Activated B cell treated with CpG ODN at 0.5 μM for 24 hours (primary cell): ENCODE measurements at regions of chr11 and their contacts with region 1.

Region 1: DNA sequence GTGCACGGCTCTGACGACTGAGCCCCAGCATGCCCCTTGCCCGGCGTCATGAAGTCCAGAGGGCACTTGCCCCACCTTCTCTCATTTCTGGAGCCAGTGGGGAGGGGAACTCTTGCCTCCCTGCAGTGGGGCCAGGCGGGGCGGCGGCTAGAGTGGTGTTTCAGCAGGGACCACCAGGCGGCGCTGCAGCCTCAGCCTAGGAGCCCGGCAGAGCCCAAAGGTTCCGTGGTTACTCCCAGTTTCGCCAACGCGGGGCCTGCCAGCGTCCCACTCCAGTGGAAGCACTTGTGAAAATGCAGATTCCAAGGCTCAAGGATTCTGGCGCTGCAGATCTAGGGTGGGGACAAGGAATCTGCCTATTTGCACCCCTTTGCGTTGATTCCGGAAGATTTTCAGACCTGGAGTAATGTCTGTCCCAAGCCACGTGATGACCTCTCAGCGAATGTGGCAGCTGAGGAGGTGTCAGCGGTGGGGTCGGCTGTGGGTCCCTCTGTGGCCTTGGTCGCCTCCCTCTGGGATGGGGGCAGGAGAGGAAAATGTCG is 55.7 kb downstream of the CD82 start:
- DNase-seq: peak; percentile 71
- ATAC-seq: peak; percentile 49
- H3K4me3 Mint-ChIP-seq: peak overlapping the region; percentile 15
- H3K27ac Mint-ChIP-seq: no peak overlapping the region
- H3K4me1 Mint-ChIP-seq: peaks cover 67% of the 10 kb centered on the region
- H3K27me3 Mint-ChIP-seq: no peaks in the 10 kb centered on the region
- CTCF ChIP-seq: peak; percentile 20

Region 2: DNA sequence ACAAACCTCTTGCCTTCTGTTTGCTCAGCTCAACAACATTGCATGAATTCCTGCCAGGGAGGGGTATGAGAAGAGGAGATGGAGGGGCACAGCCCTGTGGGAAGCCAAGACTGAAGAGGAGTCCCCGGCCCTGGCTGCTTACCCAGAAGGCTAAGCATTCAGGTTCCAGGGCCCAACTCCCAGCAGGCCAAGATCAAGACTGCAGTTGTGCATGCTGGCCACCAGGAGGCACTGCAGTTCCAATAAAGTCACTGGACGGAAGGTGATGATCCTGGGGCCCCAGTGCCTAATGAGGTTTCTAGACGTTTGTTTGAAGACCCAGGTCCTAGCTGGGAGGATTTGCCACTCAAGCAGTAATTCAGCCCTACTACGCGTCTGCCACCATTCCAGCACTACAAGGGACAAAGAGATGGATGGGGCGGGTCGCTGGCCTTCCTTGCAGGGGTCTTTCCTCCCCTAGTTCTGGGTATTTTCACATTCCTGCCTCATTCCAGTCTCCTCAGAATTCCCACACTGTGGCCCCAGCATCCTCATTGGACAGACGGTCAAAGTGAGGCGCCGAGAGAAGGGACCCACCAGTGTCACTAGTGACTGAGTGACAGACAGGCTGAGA is 334.8 kb before region 1 on chr11:
- CTCF ChIA-PET with region 1: interaction called, 4 read pairs
- POLR2A ChIA-PET with region 1: no interaction called
- intact Hi-C with region 1: loop called (anchors 2 kb)
- DNase-seq: peak; percentile 55
- ATAC-seq: peak; percentile 79
- H3K4me3 Mint-ChIP-seq: no peak overlapping the region
- H3K27ac Mint-ChIP-seq: peak overlapping the region; percentile 16
- H3K4me1 Mint-ChIP-seq: no peaks in the 10 kb centered on the region
- H3K27me3 Mint-ChIP-seq: peaks cover 16% of the 10 kb centered on the region
- CTCF ChIP-seq: peak; percentile 44

Region 3: DNA sequence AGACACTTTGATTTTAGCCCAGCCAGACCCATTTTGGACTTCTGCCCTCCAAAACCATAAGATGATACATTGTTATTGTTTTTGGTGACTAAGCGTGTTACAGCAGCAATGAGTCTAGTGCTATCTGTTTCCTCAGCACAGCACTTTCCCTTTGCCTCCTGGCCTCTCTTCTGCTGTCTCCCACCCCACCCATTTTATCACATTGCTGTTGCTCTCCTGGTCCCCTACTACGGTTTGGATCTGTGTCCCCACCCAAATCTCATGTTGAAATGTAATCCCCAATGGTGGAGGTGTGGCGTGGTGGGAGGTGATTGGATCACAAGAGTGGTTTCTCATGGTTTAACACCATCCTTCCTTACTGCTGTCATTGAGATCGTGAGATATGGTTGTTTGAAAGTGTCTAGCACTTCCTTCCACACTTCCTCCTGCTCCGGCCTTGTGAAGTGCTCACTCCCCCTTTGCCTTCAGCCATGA is 115.6 kb before region 1 on chr11:
- CTCF ChIA-PET with region 1: no interaction called
- POLR2A ChIA-PET with region 1: no interaction called
- intact Hi-C with region 1: no loop called
- DNase-seq: no peak
- ATAC-seq: no peak
- H3K4me3 Mint-ChIP-seq: no peak overlapping the region
- H3K27ac Mint-ChIP-seq: no peak overlapping the region
- H3K4me1 Mint-ChIP-seq: no peaks in the 10 kb centered on the region
- H3K27me3 Mint-ChIP-seq: peaks cover 11% of the 10 kb centered on the region
- CTCF ChIP-seq: no peak

Region 4: GRCh38 chr11:44556735-44557409 is 64.3 kb before region 1 on chr11:
- CTCF ChIA-PET with region 1: interaction called, 398 read pairs
- POLR2A ChIA-PET with region 1: interaction called, 176 read pairs
- intact Hi-C with region 1: loop called (anchors 1 kb)
- DNase-seq: no peak
- ATAC-seq: peak; percentile 51
- H3K4me3 Mint-ChIP-seq: peak overlapping the region; percentile 49
- H3K27ac Mint-ChIP-seq: peak overlapping the region; percentile 90
- H3K4me1 Mint-ChIP-seq: peaks cover 64% of the 10 kb centered on the region
- H3K27me3 Mint-ChIP-seq: no peaks in the 10 kb centered on the region
- CTCF ChIP-seq: peak; percentile 21

Region 5: GRCh38 chr11:44572884-44573283 is 48.3 kb before region 1 on chr11:
- CTCF ChIA-PET with region 1: interaction called, 16 read pairs
- POLR2A ChIA-PET with region 1: interaction called, 308 read pairs
- intact Hi-C with region 1: no loop called
- DNase-seq: no peak
- ATAC-seq: no peak
- H3K4me3 Mint-ChIP-seq: peak overlapping the region; percentile 74
- H3K27ac Mint-ChIP-seq: peak overlapping the region; percentile 69
- H3K4me1 Mint-ChIP-seq: peaks cover 98% of the 10 kb centered on the region
- H3K27me3 Mint-ChIP-seq: no peaks in the 10 kb centered on the region
- CTCF ChIP-seq: no peak

Region 6: GRCh38 chr11:44634401-44635281 is 13.4 kb after region 1 on chr11:
- CTCF ChIA-PET with region 1: interaction called, 11 read pairs
- POLR2A ChIA-PET with region 1: interaction called, 4 read pairs
- intact Hi-C with region 1: no loop called
- DNase-seq: no peak
- ATAC-seq: peak; percentile 60
- H3K4me3 Mint-ChIP-seq: no peak overlapping the region
- H3K27ac Mint-ChIP-seq: no peak overlapping the region
- H3K4me1 Mint-ChIP-seq: peaks cover 7% of the 10 kb centered on the region
- H3K27me3 Mint-ChIP-seq: peaks cover 23% of the 10 kb centered on the region
- CTCF ChIP-seq: no peak

Region 7: GRCh38 chr11:44893846-44894617 is 272.8 kb after region 1 on chr11:
- CTCF ChIA-PET with region 1: interaction called, 3 read pairs
- POLR2A ChIA-PET with region 1: no interaction called
- intact Hi-C with region 1: loop called (anchors 1 kb)
- DNase-seq: no peak
- ATAC-seq: peak; percentile 60
- H3K4me3 Mint-ChIP-seq: no peak overlapping the region
- H3K27ac Mint-ChIP-seq: no peak overlapping the region
- H3K4me1 Mint-ChIP-seq: no peaks in the 10 kb centered on the region
- H3K27me3 Mint-ChIP-seq: peaks cover 8% of the 10 kb centered on the region
- CTCF ChIP-seq: no peak